Activated naive CD4-positive, alpha-beta T cell treated with anti-CD3 and anti-CD28 coated beads for 36 hours (primary cell): ENCODE measurements at regions of chr21 and their contacts with region 1.

Region 1: DNA sequence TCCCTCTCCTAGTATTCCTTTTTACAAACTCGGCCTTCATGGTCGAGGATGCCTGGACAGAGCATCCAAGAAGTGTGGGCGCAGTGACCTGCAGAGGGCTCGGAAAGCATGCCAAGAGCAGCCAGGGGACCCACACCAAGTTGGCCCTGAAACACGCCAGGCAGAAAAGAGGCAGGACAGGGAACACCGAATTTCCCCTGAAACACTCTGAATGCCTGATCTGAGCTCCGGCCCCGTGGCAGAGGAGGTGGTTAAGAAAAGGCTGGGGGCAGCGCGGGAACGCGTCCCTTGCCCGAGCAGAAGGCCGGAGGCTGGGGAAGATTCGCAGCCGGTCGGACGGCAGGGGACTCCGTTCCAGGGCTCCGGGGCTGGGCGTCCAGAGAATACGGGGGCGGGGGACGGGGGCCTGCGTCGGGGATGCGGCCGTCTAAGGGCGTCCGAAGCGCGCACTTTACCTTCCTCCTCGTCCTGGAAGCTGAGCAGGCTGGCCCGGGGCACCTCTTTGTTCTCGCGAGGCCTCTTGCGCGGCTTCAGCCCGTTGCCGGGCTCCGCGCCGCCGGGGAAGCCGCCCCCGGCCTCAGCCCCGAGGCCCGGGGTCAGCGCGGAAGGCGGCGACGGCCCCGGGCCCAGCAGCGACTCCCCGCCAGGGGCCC is 558 bp downstream of the PAXBP1 start:
- DNase-seq: peak; percentile 67
- H3K4me3 Mint-ChIP-seq: peak overlapping the region; percentile 92
- H3K27ac Mint-ChIP-seq: peak overlapping the region; percentile 89
- H3K4me1 Mint-ChIP-seq: peaks cover 54% of the 10 kb centered on the region
- H3K27me3 Mint-ChIP-seq: no peaks in the 10 kb centered on the region

Region 2: DNA sequence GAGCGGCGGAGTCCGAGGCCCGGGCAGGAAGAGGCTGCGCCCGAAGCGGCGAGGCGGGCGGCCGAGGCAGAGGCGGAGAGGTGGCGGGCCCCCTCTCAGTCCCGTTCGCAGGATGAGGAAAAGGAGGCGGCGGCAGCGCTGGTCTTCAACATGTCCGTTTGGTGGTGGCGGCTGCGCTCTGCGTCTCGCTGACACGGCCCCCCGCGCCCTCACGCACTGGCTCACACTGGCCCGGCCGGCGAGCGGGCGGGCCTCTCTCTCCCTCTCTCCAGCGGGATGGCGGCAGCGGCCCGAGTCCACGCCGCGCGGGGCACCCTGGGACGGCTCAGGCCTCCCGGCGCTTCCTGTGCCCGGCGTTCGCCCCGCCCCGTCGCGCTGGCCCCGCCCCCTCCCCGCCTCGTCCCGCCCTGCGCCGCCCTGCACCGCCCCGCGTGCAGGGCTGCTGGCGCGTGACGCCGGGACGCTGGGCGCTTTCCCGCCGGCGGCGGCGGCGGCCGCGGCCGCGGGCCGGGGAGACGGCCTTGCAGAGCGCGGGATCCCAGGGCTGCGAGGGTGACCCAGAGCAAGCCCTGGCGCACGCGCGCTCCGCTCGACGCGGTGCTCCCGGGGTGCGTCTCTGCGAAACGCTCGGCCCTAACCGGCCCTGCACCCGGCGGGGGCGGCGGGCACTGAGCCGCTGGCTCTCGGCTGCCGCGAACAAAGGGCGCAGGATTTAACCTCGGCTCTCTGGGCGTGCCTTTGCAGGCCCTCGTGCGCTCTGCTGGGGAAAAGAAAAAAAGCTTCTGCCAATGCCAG is 1039.0 kb before region 1 on chr21 and contains the start of gene SCAF4:
- CTCF ChIA-PET with region 1: no interaction called
- intact Hi-C with region 1: loop called (anchors 5 kb)
- DNase-seq: peak; percentile 75
- H3K4me3 Mint-ChIP-seq: peak within 1 kb of the TSS; percentile 83
- H3K27ac Mint-ChIP-seq: peak within 1 kb of the TSS; percentile 64
- H3K4me1 Mint-ChIP-seq: peaks cover 18% of the 10 kb centered on the region
- H3K27me3 Mint-ChIP-seq: no peaks in the 10 kb centered on the region
- total RNA-seq, gene SCAF4: 39.6 to 40.5 TPM

Region 3: DNA sequence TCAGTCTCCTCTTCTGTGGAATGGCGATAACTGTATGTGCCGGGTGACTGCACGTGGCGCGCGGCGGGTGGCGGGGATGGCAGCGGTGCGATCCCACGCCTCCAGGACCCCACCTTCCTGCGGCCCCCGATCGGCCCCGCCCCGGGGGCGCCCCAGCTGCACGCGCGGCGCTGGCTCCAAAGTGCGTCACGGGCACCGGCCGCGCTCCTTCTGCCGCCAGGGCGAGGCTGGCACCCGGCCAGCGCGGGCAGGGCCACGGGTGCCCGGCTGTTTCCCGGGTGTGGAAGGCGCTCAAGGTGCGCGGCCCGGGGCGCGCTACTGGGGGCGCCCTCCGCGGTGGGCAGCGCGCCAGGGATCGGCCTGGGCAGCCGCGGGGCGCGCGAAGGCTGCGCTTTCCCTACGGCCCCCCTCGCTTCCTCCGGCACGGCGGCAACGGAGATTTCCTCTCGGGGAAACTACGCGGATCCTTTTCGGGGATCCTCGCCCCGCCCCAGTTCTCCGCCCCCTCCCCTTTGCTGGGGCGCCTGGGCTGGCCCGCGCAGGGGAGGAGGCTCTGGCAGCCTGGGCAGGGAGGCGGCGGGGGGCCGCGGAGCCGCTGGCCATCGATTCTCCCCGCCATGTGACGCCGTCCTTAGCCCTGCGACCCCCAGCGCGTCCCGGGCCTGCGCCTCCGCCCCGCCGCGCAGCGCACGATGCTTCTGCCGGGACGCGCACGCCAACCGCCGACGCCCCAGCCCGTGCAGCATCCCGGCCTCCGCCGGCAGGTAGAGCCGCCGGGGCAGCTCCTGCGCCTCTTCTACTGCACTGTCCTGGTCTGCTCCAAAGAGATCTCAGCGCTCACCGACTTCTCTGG is 358.6 kb before region 1 on chr21 and contains the start of gene EVA1C:
- CTCF ChIA-PET with region 1: no interaction called
- intact Hi-C with region 1: loop called (anchors 2 kb)
- DNase-seq: peak; percentile 61
- H3K4me3 Mint-ChIP-seq: peak within 1 kb of the TSS; percentile 92
- H3K27ac Mint-ChIP-seq: peak within 1 kb of the TSS; percentile 90
- H3K4me1 Mint-ChIP-seq: peaks cover 33% of the 10 kb centered on the region
- H3K27me3 Mint-ChIP-seq: no peaks in the 10 kb centered on the region
- total RNA-seq, gene EVA1C: 5.3 to 5.9 TPM

Region 4: GRCh38 chr21:32712043-32712442 is 59.0 kb before region 1 on chr21:
- CTCF ChIA-PET with region 1: no interaction called
- intact Hi-C with region 1: no loop called
- DNase-seq: peak; percentile 21
- H3K4me3 Mint-ChIP-seq: no peak overlapping the region
- H3K27ac Mint-ChIP-seq: no peak overlapping the region
- H3K4me1 Mint-ChIP-seq: peaks cover 23% of the 10 kb centered on the region
- H3K27me3 Mint-ChIP-seq: no peaks in the 10 kb centered on the region

Region 5: DNA sequence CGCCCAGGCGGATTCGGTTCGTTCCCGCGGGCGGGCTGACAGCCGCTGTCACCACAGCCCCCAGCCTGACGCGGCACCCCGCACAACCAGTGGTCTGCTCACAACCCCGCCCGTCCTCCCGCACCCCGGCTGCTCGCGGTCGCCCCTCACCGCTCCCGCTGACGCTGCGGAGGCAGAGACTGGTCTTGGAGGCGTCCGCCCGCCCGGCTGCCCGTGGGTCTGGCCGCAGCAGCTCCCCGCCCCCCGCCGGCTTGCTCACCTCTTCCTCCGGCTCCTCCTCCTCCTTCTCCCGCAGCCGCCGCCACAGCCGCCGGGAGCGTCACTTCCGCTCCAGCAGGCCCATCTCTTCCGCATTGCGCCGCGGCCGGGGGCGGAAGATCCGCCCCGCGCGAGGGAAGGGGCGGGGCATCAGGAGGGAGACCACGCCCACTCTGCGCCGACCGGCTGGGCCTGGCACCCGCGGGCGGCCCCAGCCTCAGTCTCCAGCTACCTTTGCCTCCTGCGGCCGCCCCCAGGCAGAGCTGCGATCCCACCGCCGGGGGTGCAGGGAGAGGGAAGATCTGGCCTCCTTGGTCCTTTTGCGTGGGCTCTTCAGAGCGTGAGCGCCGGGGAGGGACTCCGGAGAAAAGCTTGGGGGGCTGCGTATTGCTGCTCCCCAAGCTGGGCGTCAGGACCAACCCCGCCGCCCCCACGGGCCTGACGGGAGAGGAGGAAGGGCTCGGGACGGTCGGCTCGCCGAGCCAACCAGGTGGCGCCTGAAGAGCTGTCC is 43.1 kb before region 1 on chr21 and contains the start of gene SYNJ1:
- CTCF ChIA-PET with region 1: interaction called, 6 read pairs
- intact Hi-C with region 1: loop called (anchors 1 kb)
- DNase-seq: peak; percentile 94
- H3K4me3 Mint-ChIP-seq: peak within 1 kb of the TSS; percentile 96
- H3K27ac Mint-ChIP-seq: peak within 1 kb of the TSS; percentile 88
- H3K4me1 Mint-ChIP-seq: peaks cover 45% of the 10 kb centered on the region
- H3K27me3 Mint-ChIP-seq: no peaks in the 10 kb centered on the region
- total RNA-seq, gene SYNJ1: 7.4 to 10.9 TPM

Region 6: GRCh38 chr21:33229784-33230544 is 459.0 kb after region 1 on chr21 and contains the start of gene IFNAR2:
- CTCF ChIA-PET with region 1: no interaction called
- intact Hi-C with region 1: loop called (anchors 5 kb)
- DNase-seq: peak; percentile 73
- H3K4me3 Mint-ChIP-seq: peak within 1 kb of the TSS; percentile 89
- H3K27ac Mint-ChIP-seq: peak within 1 kb of the TSS; percentile 92
- H3K4me1 Mint-ChIP-seq: peaks cover 52% of the 10 kb centered on the region
- H3K27me3 Mint-ChIP-seq: no peaks in the 10 kb centered on the region
- total RNA-seq, gene IFNAR2: 16.6 to 19.4 TPM

Region 7: DNA sequence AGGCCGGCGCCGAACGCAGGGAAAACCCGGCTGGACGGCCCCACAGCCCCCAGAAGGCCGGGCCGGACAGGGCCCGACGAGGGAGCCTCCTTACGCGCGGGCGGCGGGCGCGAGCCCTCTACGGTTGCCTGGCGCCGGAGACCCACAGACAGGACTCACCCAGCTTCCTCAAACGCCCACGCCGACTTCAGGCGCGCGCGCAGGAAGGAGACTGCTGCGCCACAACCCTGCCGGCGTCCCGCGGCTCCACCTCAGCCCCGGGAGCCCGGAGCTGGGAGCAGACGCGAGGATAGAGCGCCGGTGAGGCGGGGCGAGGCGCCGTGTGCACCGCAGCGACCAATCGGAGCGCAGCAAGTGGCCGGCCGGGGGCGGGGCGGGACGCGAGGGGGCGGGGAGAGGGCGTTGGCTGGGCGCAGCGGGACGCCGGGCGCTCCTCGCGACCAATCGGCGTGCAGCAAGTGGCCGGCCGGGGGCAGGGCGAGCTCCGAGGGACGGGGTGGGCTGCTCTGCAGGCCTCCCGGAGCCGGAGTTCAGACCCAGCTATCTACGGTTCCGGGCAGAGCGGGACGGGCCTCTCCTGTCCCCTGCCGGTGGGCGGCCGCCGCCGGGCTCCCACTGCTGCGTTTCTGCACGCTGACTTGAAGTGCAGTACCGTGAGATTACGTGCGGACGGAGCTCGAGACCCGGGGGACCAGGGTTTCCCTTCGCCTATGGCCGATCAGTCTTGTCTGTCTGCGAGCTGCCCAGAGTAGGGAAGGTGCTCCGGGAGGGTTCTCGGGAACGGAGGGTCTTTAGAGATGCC is 708.9 kb after region 1 on chr21 and contains the start of gene TMEM50B:
- CTCF ChIA-PET with region 1: no interaction called
- intact Hi-C with region 1: loop called (anchors 5 kb)
- DNase-seq: peak; percentile 96
- H3K4me3 Mint-ChIP-seq: peak within 1 kb of the TSS; percentile 89
- H3K27ac Mint-ChIP-seq: peak within 1 kb of the TSS; percentile 68
- H3K4me1 Mint-ChIP-seq: peaks cover 15% of the 10 kb centered on the region
- H3K27me3 Mint-ChIP-seq: no peaks in the 10 kb centered on the region
- total RNA-seq, gene TMEM50B: 17.8 to 18.2 TPM